Activated T-helper 2 cell treated with anti-CD3 and anti-CD28 coated beads, Interferon-gamma antibody, Interleukin-2, Interleukin-4, amounts not matched to agents 10 μg/mL and 5 μg/mL and 100 μg/mL, durations not matched to agents 14 hours and 24 hours and 36 hours (primary cell): ENCODE measurements at regions of chr17 and their contacts with region 1.

Region 1: GRCh38 chr17:10646392-10646990 is 10.6 kb downstream of the MYH3 start:
- DNase-seq: peak; percentile 58
- H3K4me3 Mint-ChIP-seq: no peak overlapping the region
- H3K27ac Mint-ChIP-seq: no peak overlapping the region
- H3K4me1 Mint-ChIP-seq: no peaks in the 10 kb centered on the region
- H3K27me3 Mint-ChIP-seq: no peaks in the 10 kb centered on the region

Region 2: DNA sequence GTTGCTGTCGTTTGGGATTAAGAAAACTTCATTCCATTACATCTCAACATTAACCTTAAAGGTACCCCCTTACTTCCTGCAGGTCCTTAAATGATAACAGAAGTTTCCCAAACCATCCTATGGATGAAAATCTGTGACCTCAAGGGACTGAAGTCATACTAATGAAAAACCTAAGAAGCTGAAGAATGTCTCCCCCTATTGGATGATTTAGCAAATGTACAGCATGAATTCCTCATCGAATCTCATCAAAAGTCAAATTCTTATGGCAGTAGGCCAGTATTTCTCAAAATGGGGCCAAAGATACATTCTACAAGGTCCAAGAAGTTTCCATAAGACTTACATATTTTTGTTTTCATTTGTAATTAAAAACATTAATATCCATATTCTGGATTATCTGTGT is 37.4 kb after region 1 on chr17:
- intact Hi-C with region 1: loop called (anchors 5 kb)
- DNase-seq: no peak
- H3K4me3 Mint-ChIP-seq: no peak overlapping the region
- H3K27ac Mint-ChIP-seq: no peak overlapping the region
- H3K4me1 Mint-ChIP-seq: peaks cover 3% of the 10 kb centered on the region
- H3K27me3 Mint-ChIP-seq: no peaks in the 10 kb centered on the region

Region 3: GRCh38 chr17:11986942-11987329 is 1340.4 kb after region 1 on chr17:
- intact Hi-C with region 1: loop called (anchors 10 kb)
- DNase-seq: no peak
- H3K4me3 Mint-ChIP-seq: no peak overlapping the region
- H3K27ac Mint-ChIP-seq: no peak overlapping the region
- H3K4me1 Mint-ChIP-seq: peaks cover 4% of the 10 kb centered on the region
- H3K27me3 Mint-ChIP-seq: no peaks in the 10 kb centered on the region